ENCODE measurements at regions of chr12 and their contacts with region 1.

Region 1: GRCh38 chr12:49866859-49867579 is 24.1 kb upstream of the BCDIN3D start:
- DNase-seq: peak; percentile 74
- H3K4me3 ChIP-seq: no peak overlapping the region
- H3K27ac ChIP-seq: peak overlapping the region; percentile 82
- H3K4me1 ChIP-seq: peaks cover 39% of the 10 kb centered on the region
- H3K27me3 ChIP-seq: peaks cover 20% of the 10 kb centered on the region
- CTCF ChIP-seq: peak; percentile 98

Region 2: GRCh38 chr12:49945394-49946080 is 78.5 kb after region 1 on chr12:
- intact Hi-C with region 1: loop called (anchors 10 kb)
- DNase-seq: peak; percentile 85
- H3K4me3 ChIP-seq: peak overlapping the region; percentile 52
- H3K27ac ChIP-seq: peak overlapping the region; percentile 49
- H3K4me1 ChIP-seq: peaks cover 12% of the 10 kb centered on the region
- H3K27me3 ChIP-seq: peaks cover 7% of the 10 kb centered on the region
- CTCF ChIP-seq: peak; percentile 92